ENCODE measurements at regions of chr22 and their contacts with region 1.

Region 1: DNA sequence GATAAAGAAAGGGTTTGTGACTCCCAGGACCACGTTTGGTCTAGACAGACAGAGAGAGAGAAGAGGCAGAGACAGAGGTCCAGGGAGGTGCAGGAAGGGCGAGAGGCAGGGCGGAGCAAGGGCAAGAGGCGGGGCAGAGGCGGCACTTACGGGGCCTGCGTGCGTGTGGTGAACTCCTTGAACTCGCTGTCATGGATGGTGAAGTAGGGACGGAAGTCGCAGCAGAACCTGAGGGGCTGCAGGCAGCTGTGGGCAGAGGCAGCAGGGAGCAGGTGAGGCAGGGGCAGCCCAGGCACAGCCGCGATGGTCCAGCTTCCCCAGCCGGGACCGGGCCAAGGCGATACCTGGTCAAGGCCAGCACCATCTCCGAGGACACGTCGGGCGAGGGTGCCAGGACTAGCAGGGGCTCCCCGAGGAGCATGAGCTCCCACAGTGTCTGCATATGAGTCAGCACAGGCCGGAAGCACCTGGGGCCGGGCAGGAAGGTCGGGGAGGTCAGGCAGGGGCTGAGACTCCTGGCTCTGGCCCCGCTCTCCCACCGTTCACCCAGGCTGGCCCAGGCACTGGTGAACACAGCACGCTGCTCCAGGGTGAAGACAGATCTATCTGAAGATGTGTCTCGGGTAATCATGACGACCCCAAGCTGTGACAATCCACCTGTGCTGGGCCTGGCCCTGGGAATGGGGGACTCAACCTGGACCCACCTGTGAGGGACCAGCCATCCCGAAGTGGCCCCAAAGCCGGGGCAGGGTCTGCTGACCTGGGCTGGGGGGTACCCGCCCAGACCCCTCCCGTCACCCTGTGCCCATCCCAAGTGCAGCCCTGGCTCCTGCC is 7.2 kb upstream of the PLXNB2 start:
- DNase-seq: peak; percentile 89
- ATAC-seq: peak; percentile 86
- H3K4me3 ChIP-seq: peak overlapping the region in 4 of 5 experiments; percentile 34 to 61 (median 45)
- H3K4me3 Mint-ChIP-seq: peak overlapping the region; percentile 88
- H3K27ac ChIP-seq: peak overlapping the region; percentile 63 to 71
- H3K27ac Mint-ChIP-seq: peak overlapping the region; percentile 97
- H3K4me1 ChIP-seq: peaks cover 23 to 48% of the 10 kb centered on the region in 2 donors
- H3K4me1 Mint-ChIP-seq: peaks cover 43% of the 10 kb centered on the region
- H3K27me3 ChIP-seq: no peaks in the 10 kb centered on the region
- H3K27me3 Mint-ChIP-seq: no peaks in the 10 kb centered on the region
- CTCF ChIP-seq: no peak

Region 2: GRCh38 chr22:50301581-50302541 is 12.8 kb before region 1 on chr22:
- CTCF ChIA-PET with region 1: interaction called, 3 read pairs
- POLR2A ChIA-PET with region 1: interaction called, 61 read pairs
- intact Hi-C with region 1: loop called (anchors 1 kb)
- DNase-seq: peak; percentile 74
- ATAC-seq: peak; percentile 14
- H3K4me3 ChIP-seq: no peak overlapping the region
- H3K4me3 Mint-ChIP-seq: peak overlapping the region; percentile 81
- H3K27ac ChIP-seq: no peak overlapping the region
- H3K27ac Mint-ChIP-seq: peak overlapping the region; percentile 80
- H3K4me1 ChIP-seq: peaks cover 73 to 79% of the 10 kb centered on the region in 2 donors
- H3K4me1 Mint-ChIP-seq: peaks cover 62% of the 10 kb centered on the region
- H3K27me3 ChIP-seq: peaks cover 0 to 28% (median 10%) of the 10 kb centered on the region in 4 experiments
- H3K27me3 Mint-ChIP-seq: peaks cover 13% of the 10 kb centered on the region
- CTCF ChIP-seq: no peak

Measured in B cell (primary cell).